Prostate gland (tissue), 2 donors: ENCODE measurements at regions of chr4 and their contacts with region 1.

Region 1: DNA sequence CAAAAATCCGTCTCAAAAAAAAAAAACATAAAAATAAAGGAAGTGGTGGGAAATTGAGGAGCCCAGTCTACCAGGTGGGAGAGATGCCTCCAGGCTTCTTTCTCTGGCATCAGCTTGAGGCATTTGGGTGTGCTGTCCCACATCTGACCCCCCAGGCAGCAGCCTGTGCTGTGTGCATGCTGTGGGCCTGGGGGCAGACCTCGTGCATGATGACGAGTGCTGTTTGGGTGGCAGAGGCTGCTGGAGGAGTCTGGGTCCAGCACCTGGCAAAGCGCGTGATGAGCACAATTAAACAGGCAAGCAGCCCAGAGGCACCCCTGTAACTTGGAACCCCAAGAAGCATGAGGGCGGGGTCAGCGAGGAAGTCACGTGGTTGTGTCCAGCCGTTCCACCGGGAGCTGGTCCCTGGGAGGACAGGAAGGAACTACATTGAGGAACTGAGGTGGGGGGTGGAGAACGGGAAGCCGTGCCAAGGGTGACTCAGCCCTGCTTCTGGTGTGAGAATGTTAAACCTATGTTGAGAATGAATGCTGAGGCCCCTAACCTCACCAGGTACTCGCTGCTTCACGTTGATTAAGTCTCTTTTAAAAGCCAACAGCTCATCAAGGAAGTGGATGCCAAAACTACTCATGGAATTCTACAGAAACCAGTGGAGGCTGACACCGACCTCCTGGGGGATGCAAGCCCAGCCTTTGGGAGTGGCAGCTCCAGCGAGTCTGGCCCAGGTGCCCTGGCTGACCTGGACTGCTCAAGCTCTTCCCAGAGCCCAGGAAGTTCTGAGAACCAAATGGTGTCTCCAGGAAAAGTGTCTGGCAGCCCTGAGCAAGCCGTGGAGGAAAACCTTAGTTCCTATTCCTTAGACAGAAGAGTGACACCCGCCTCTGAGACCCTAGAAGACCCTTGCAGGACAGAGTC is 6.1 kb downstream of the TACC3 start:
- DNase-seq: no peak
- H3K4me3 ChIP-seq: no peak overlapping the region
- H3K27ac ChIP-seq: no peak overlapping the region
- H3K4me1 ChIP-seq: no peaks in the 10 kb centered on the region
- H3K27me3 ChIP-seq: no peaks in the 10 kb centered on the region
- CTCF ChIP-seq: no peak
- POLR2A ChIP-seq: no peak

Region 2: DNA sequence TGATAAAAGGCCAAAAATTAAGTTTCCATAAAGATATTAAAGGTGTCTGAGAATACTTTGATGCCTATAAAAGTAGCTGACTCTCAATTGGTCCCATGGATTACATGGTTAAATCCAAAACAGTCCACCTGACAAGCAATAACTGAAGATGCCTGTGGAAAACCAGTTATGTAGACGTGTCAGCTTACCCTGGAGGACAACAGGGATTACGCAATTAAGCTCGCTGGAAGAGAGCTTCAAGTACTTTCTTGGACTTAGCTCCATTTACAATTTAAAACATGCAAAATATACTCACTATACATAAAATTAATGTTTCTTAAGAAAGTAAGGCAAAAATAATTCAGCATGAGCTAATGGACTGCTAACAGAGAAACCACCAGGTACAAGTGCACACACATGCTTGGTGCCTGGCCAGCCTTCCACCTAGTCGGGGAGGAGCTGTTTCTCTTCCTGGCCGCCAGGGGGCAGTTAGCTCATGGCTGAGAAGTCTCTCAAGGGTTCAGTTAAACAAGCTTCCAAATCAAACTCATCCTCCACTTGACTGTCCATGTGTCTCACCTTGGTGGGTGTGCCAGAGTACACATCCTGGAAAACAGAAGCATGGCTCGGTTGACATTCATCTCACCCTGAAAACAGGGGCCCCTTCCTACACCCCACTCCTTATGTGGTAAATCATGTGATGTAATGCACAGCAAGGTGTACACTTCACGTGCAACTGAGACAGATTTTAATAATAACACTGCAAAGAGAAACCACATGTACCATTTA is 34.1 kb before region 1 on chr4:
- intact Hi-C with region 1: loop called (anchors 2 kb)
- DNase-seq: peak; percentile 76
- H3K4me3 ChIP-seq: no peak overlapping the region
- H3K27ac ChIP-seq: no peak overlapping the region
- H3K4me1 ChIP-seq: no peaks in the 10 kb centered on the region
- H3K27me3 ChIP-seq: no peaks in the 10 kb centered on the region
- CTCF ChIP-seq: peak; percentile 61 to 94 (median 90)
- POLR2A ChIP-seq: no peak